Heart left ventricle (tissue), 16 donors: ENCODE measurements at regions of chr6 and their contacts with region 1.

Region 1: DNA sequence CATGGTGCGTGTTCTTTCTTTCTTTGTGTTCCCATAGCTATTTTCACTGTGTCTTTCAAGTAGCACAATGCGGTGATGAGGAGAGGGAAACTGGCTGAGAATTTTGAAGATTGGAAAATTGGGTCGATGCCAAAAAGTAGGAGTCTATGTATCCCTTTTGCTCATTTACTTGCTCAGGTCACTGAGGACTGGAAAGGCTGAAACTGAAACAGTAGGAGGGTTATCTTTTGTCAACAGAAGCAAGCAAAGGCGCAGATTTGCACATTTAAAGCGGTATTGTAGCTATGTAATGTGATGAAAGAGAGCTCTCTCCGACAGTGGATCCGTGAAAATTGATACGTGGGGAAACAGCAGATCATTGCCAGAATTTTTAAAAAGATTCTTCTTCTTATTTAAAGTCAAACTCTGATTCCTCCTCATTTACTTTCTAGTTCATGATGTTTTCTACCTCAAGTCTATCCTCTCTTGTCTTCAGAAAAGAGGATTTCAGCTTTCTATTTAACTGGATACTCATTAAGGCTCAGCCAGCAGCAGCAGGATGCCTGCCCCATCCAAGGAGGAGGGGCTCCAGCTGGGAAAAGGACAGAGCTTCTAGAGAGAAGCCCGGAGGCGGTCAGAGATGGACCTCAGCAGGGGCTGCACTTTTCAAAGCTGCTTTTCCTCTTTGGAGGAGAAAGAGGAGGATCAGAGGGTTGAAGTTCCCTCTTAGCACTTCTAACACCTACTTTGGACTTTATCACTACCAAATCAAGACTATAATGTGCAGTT is 15.9 kb upstream of the FYN start:
- DNase-seq: peak in 3 of 5 donors; percentile 39 to 51 (median 42)
- ATAC-seq: peak; percentile 59 to 86 (median 70)
- H3K4me3 ChIP-seq: peak overlapping the region in 9 of 12 donors; percentile 8 to 51 (median 29)
- H3K27ac ChIP-seq: peak overlapping the region in 8 of 12 donors; percentile 5 to 58 (median 40)
- H3K4me1 ChIP-seq: peaks cover 0 to 15% (median 2%) of the 10 kb centered on the region in 12 donors
- H3K27me3 ChIP-seq: no peaks in the 10 kb centered on the region
- CTCF ChIP-seq: no peak
- POLR2A ChIP-seq: no peak

Region 2: GRCh38 chr6:111925296-111925695 is 36.2 kb after region 1 on chr6:
- intact Hi-C with region 1: loop called in 1 of 10 experiments (anchors 5 kb)
- DNase-seq: no peak
- ATAC-seq: no peak
- H3K4me3 ChIP-seq: no peak overlapping the region
- H3K27ac ChIP-seq: no peak overlapping the region
- H3K4me1 ChIP-seq: peaks cover 0 to 17% (median 0%) of the 10 kb centered on the region in 12 donors
- H3K27me3 ChIP-seq: no peaks in the 10 kb centered on the region
- CTCF ChIP-seq: no peak
- POLR2A ChIP-seq: no peak

Region 3: GRCh38 chr6:111980971-111981840 is 92.1 kb after region 1 on chr6:
- intact Hi-C with region 1: loop called in 1 of 10 experiments (anchors 5 kb)
- DNase-seq: peak; percentile 22 to 67 (median 33)
- ATAC-seq: peak in 2 of 4 donors; percentile 38 to 47
- H3K4me3 ChIP-seq: no peak overlapping the region
- H3K27ac ChIP-seq: peak overlapping the region in 2 of 12 donors; percentile 32 to 58
- H3K4me1 ChIP-seq: peaks cover 0 to 17% (median 0%) of the 10 kb centered on the region in 12 donors
- H3K27me3 ChIP-seq: no peaks in the 10 kb centered on the region
- CTCF ChIP-seq: no peak
- POLR2A ChIP-seq: no peak

Region 4: GRCh38 chr6:112539355-112539754 is 650.2 kb after region 1 on chr6:
- intact Hi-C with region 1: no loop called
- DNase-seq: no peak
- ATAC-seq: no peak
- H3K4me3 ChIP-seq: no peak overlapping the region
- H3K27ac ChIP-seq: no peak overlapping the region
- H3K4me1 ChIP-seq: no peaks in the 10 kb centered on the region
- H3K27me3 ChIP-seq: no peaks in the 10 kb centered on the region
- CTCF ChIP-seq: no peak
- POLR2A ChIP-seq: no peak

Region 5: DNA sequence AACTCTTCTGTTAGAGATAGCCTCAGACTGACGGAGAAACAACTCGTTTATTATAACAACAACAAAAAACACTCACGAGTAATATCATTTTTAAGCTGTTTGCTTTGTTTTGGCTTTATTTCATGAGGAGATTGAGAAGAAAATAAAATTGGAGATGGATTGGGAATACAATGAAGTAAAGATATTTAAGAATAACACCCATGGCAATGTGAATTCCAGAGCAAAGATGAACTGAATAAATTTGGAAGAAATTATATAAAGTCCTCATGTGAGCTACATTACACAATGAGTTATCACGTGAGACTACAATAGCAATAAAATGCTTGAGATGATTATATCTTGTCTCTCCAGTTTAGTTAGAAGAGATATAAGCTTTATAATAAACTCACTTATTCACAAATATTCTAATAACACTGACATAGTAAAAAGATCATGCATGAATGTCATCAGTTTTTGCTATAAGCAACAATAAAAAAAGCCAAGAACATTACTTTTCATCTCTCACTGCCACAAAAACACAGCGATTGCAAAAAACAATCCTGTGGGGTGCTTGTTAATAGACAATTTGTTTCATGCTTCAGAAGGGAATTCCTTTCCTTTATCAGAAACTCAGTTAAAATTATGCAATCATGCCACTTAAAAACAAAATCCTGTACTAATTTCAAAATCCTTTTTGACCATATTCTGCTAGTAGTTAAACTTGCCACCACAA is 1271.3 kb after region 1 on chr6:
- intact Hi-C with region 1: no loop called
- DNase-seq: no peak
- ATAC-seq: no peak
- H3K4me3 ChIP-seq: no peak overlapping the region
- H3K27ac ChIP-seq: no peak overlapping the region
- H3K4me1 ChIP-seq: no peaks in the 10 kb centered on the region
- H3K27me3 ChIP-seq: no peaks in the 10 kb centered on the region
- CTCF ChIP-seq: no peak
- POLR2A ChIP-seq: no peak